GM13977 (cell line): ENCODE measurements at regions of chr5 and their contacts with region 1.

Region 1: GRCh38 chr5:150560401-150561193 is 52.7 kb downstream of the NDST1 start:
- DNase-seq: peak; percentile 83
- CTCF ChIP-seq: peak; percentile 79

Region 2: DNA sequence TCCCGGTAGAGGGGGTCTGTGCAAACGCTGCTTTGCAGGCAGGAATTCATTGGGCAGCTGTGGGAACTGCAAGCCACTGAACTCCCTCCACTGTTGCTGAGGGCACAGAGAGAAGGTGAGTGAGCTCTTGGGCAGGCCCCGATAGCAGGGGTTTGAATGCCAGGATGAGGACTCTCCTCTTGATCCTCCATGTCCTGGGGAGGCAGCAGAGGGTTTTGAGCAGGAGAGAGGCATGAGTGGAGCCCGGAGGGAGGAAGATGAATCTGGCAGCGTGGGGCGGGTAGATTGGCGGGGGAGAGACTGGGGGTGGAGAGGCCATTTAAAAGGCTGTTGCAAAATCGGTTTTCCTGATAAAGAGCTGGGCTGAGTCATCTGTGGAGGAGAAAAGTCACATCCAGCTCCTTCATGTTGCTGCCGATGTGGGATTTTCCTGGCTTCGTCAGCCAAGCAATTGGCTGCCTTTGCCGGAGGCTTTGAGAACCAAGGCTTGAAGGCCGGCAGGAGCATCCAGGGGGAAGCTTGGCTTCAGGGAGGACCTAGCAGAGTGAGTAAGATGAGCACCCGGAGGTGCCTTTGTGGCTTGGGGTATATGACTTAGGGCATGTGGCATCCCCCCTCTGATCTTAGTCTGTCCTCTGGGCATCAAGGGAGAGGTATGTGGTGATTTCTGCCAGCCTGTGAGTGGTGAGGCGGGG is 79.9 kb after region 1 on chr5 and contains the start of gene SYNPO:
- in situ Hi-C with region 1: loop called (anchors 10 kb)
- DNase-seq: no peak
- CTCF ChIP-seq: no peak

Region 3: GRCh38 chr5:150801117-150801927 is 240.7 kb after region 1 on chr5:
- in situ Hi-C with region 1: loop called (anchors 25 kb)
- DNase-seq: peak; percentile 42
- CTCF ChIP-seq: peak; percentile 51

Region 4: GRCh38 chr5:150879358-150879757 is 318.8 kb after region 1 on chr5:
- in situ Hi-C with region 1: no loop called
- DNase-seq: no peak
- CTCF ChIP-seq: no peak